Right ventricle myocardium inferior (tissue), 1 donor: ENCODE measurements at regions of chr9 and their contacts with region 1.

Region 1: DNA sequence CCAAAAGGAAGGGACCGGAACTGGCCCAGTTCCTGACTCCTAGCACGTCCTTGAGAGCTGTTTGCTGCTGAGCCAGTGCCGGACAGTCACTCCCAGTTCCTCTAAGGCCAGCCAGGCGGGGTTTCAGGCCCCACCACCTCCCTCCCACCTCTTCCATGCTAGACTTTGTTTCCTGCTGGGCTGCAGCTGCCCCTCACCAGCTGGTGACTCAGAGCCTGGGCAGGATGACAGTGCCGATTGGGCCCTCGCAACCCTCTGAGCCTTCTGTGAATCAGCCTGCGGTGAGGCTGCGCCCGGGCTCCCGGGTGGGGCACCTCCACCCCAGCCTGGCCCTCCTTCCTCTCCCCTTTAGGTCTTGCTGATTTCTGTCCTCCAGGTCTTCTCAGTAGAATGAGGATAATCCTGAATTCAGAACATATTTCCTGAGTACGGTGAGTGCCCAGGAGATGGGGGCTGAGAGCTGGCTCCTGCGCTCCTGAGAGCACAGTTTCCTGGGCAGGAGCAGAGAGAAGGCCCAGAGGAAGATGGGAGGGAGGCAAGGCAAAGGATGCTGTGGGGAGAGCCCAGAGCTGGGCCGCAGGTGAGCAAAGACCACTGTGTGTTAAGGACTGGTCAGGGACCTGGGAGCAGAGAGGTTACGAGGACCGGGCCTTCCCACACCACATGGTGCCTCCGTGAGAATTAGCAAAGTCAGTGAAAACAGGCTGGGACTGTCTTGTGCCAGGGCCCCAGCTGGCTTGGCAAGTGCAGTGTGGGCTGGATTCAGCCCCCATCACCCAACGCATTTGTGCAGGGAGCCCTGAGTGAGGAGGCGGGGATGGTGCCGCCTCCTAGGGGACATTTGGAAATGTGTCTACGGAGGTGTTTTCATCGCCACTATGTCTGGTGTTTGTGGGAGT is 32.9 kb upstream of the STXBP1 start:
- DNase-seq: peak; percentile 92
- ATAC-seq: peak; percentile 90

Region 2: GRCh38 chr9:127519301-127520166 is 59.7 kb before region 1 on chr9:
- intact Hi-C with region 1: loop called (anchors 2 kb)
- DNase-seq: peak; percentile 50
- ATAC-seq: peak; percentile 22

Region 3: GRCh38 chr9:128007566-128008138 is 428.4 kb after region 1 on chr9:
- intact Hi-C with region 1: no loop called
- DNase-seq: peak; percentile 79
- ATAC-seq: no peak